ENCODE measurements at regions of chr4 and their contacts with region 1.

Region 1: DNA sequence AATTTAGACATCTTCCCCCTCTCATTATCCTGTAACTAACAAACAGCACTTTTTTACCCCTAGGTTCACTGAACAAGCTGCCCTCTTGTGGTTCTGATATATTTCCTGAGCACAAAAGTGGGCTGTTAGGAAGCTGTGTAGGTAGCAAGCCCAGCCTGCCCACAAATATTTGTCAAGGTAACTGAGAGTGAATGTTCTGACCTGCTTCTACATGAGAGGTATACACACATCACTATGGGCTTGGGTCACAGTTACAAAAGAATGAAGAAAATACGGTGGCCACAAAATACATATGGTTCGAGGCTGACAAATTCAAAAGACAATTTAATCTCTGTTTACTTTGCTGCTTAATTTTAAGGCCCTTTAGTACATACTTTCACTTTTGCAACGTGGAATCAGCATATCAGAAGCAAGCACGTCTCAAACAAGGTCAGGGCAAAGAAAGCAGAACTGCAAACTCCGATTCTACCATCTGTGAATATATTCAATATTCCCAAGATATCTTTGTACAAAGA is 78.7 kb downstream of the RBM47 start:
- DNase-seq: peak in 1 of 2 experiments; percentile 55
- H3K4me3 ChIP-seq: no peak overlapping the region
- H3K4me3 Mint-ChIP-seq: peak overlapping the region; percentile 43
- H3K27ac Mint-ChIP-seq: no peak overlapping the region
- H3K4me1 ChIP-seq: peaks cover 39% of the 10 kb centered on the region
- H3K4me1 Mint-ChIP-seq: peaks cover 20% of the 10 kb centered on the region
- H3K27me3 ChIP-seq: no peaks in the 10 kb centered on the region
- H3K27me3 Mint-ChIP-seq: no peaks in the 10 kb centered on the region
- CTCF ChIP-seq: peak; percentile 20 to 66

Region 2: DNA sequence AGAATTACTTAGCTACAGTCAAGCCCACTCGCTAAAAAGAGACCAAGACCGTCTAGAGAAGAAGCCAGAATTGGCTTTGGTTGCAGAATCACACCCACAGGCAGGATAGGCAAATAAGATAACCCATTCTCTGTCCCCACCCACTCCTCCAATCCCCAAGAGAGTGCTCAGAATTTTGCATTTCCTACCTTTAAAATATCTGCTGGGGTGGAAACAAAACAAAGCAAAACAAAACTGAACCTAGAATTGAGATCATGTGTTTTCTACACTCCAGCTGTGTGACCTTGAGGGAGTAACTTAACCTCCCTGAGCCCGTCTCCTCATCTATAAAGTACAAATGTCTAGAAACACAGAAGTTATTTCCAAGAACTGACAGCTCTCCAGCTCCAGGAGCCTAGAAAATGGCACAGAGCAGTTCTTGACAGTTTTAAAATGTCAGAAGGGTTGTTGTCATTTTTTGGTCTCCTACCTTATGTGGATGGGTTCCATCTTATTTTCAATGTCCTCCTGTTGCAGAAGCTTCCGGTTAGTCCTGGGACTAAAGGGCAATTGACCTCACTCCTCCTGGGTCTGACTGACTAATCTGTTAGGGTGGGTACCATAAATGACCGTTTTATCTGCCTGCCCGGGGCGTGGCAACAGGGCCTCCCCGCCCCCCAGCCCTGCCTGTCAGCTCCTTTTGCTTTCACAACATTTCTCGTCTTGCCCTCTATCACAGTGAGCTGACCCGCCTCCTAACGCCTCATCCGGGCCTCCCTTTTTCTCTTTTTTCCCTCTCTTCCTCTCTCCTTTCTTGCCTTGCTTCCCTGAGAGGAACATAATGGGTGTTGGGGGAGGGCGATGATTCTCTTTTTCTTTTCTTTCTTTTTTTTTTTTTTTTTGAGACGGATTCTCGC is 35.4 kb before region 1 on chr4:
- CTCF ChIA-PET with region 1: interaction called, 8 read pairs
- POLR2A ChIA-PET with region 1: interaction called, 11 read pairs
- intact Hi-C with region 1: loop called (anchors 1 kb)
- DNase-seq: peak; percentile 79 to 91
- H3K4me3 ChIP-seq: peak overlapping the region; percentile 62
- H3K4me3 Mint-ChIP-seq: peak overlapping the region; percentile 85
- H3K27ac Mint-ChIP-seq: peak overlapping the region; percentile 83
- H3K4me1 ChIP-seq: peaks cover 30% of the 10 kb centered on the region
- H3K4me1 Mint-ChIP-seq: peaks cover 27% of the 10 kb centered on the region
- H3K27me3 ChIP-seq: no peaks in the 10 kb centered on the region
- H3K27me3 Mint-ChIP-seq: no peaks in the 10 kb centered on the region
- CTCF ChIP-seq: no peak